Activated CD8-positive, alpha-beta T cell treated with anti-CD3 and anti-CD28 coated beads, Interleukin-2, amount 10 ng/mL, durations not matched to agents 7 days and 5 days (primary cell): ENCODE measurements at regions of chr14 and their contacts with region 1.

Region 1: GRCh38 chr14:91244501-91244901 is at the start of gene GPR68:
- DNase-seq: peak; percentile 61
- ATAC-seq: peak; percentile 12
- H3K4me3 Mint-ChIP-seq: peak within 1 kb of the TSS; percentile 87
- H3K27ac Mint-ChIP-seq: peak within 1 kb of the TSS; percentile 93
- H3K4me1 Mint-ChIP-seq: peaks cover 74% of the 10 kb centered on the region
- H3K27me3 Mint-ChIP-seq: no peaks in the 10 kb centered on the region
- total RNA-seq, gene GPR68: 44.6 to 45.3 TPM

Region 2: DNA sequence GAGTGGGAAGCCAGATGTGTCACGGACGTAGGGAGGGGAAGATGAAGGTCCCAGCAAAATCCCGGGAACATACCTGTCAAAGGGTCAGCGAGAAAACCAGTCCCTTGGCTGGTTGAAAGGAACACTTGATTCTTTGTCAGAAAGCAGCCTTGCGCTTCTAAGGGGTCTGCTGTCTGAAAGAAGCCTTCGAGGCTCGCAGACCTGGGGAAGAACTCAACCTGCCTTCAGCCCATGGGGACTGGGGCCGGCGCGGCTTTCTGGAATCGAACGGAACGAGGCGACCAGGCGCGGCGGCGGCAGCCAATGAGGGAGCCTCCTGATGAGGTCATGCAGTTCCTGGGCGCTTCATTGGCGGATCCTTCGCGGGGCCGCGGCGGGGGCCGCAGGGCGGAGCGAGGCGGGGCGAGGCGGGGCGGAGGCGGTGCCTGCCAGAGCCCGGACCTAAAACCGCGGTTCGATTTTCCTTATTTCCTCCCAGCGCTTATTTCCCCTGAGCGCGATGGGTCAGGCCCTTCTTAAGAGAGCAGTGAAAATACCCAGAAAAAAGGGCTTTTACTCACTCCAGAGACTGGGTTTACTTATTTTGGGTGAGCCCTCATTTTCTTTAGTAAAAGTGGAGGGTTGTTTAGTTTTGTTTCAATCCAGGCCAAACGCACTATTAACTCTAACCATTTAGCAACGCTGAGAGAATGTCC is 416.4 kb before region 1 on chr14:
- CTCF ChIA-PET with region 1: no interaction called
- POLR2A ChIA-PET with region 1: no interaction called
- DNase-seq: peak; percentile 94
- ATAC-seq: peak; percentile 98
- H3K4me3 Mint-ChIP-seq: peak overlapping the region; percentile 63
- H3K27ac Mint-ChIP-seq: peak overlapping the region; percentile 93
- H3K4me1 Mint-ChIP-seq: peaks cover 26% of the 10 kb centered on the region
- H3K27me3 Mint-ChIP-seq: peaks cover 5% of the 10 kb centered on the region

Region 3: GRCh38 chr14:91164685-91165084 is 79.8 kb before region 1 on chr14:
- CTCF ChIA-PET with region 1: no interaction called
- POLR2A ChIA-PET with region 1: no interaction called
- DNase-seq: no peak
- ATAC-seq: no peak
- H3K4me3 Mint-ChIP-seq: no peak overlapping the region
- H3K27ac Mint-ChIP-seq: peak overlapping the region; percentile 51
- H3K4me1 Mint-ChIP-seq: no peaks in the 10 kb centered on the region
- H3K27me3 Mint-ChIP-seq: no peaks in the 10 kb centered on the region

Region 4: GRCh38 chr14:91193069-91193468 is 51.4 kb before region 1 on chr14:
- CTCF ChIA-PET with region 1: interaction called, 6 read pairs
- POLR2A ChIA-PET with region 1: interaction called, 62 read pairs
- DNase-seq: no peak
- ATAC-seq: no peak
- H3K4me3 Mint-ChIP-seq: no peak overlapping the region
- H3K27ac Mint-ChIP-seq: peak overlapping the region; percentile 7
- H3K4me1 Mint-ChIP-seq: peaks cover 52% of the 10 kb centered on the region
- H3K27me3 Mint-ChIP-seq: no peaks in the 10 kb centered on the region

Region 5: GRCh38 chr14:91202234-91202974 is 42.1 kb before region 1 on chr14:
- CTCF ChIA-PET with region 1: interaction called, 3 read pairs
- POLR2A ChIA-PET with region 1: interaction called, 10 read pairs
- DNase-seq: peak; percentile 60
- ATAC-seq: no peak
- H3K4me3 Mint-ChIP-seq: peak overlapping the region; percentile 42
- H3K27ac Mint-ChIP-seq: peak overlapping the region; percentile 90
- H3K4me1 Mint-ChIP-seq: peaks cover 79% of the 10 kb centered on the region
- H3K27me3 Mint-ChIP-seq: no peaks in the 10 kb centered on the region

Region 6: DNA sequence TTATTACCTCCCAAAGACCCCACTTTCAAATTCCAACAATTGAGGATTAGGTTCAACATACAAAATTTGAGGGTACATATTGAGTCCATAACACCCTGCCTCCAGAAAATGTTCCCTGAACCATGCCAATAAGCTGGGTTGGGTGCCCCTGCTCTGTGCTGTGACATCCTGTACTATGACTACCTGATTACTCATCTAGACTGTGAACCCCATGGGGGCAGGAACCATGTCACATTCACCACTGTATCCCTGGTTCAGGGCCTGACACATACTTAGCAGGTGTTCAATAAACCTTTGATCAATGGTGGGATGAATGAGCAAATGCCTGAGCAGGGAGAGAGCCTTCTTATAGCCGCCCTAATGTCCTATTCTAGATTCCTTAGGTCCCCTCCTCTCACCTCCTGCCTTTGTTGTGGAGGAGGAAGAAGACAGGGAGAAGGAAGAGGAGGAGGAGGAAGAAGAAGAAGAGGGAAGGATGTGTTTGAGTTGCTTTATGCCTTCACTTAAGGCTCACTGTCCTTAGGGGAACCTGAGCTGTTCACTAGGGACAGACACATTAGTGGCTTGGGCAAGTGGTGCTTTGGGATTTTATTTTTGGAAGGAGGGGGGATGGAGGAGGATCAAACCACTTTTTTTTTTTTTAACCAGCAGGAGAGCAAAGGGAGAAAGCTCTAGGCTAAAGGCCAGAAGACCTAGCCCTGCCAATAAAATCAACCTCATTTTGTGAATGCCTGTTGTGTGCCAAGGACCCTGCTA is 21.3 kb before region 1 on chr14:
- CTCF ChIA-PET with region 1: interaction called, 85 read pairs
- POLR2A ChIA-PET with region 1: interaction called, 541 read pairs
- DNase-seq: no peak
- ATAC-seq: no peak
- H3K4me3 Mint-ChIP-seq: no peak overlapping the region
- H3K27ac Mint-ChIP-seq: peak overlapping the region; percentile 22
- H3K4me1 Mint-ChIP-seq: peaks cover 89% of the 10 kb centered on the region
- H3K27me3 Mint-ChIP-seq: no peaks in the 10 kb centered on the region

Region 7: GRCh38 chr14:91228112-91229004 is 16.1 kb before region 1 on chr14:
- CTCF ChIA-PET with region 1: interaction called, 85 read pairs
- POLR2A ChIA-PET with region 1: interaction called, 541 read pairs
- DNase-seq: peak; percentile 87
- ATAC-seq: peak; percentile 76
- H3K4me3 Mint-ChIP-seq: peak overlapping the region; percentile 75
- H3K27ac Mint-ChIP-seq: peak overlapping the region; percentile 97
- H3K4me1 Mint-ChIP-seq: peaks cover 96% of the 10 kb centered on the region
- H3K27me3 Mint-ChIP-seq: no peaks in the 10 kb centered on the region

Region 8: DNA sequence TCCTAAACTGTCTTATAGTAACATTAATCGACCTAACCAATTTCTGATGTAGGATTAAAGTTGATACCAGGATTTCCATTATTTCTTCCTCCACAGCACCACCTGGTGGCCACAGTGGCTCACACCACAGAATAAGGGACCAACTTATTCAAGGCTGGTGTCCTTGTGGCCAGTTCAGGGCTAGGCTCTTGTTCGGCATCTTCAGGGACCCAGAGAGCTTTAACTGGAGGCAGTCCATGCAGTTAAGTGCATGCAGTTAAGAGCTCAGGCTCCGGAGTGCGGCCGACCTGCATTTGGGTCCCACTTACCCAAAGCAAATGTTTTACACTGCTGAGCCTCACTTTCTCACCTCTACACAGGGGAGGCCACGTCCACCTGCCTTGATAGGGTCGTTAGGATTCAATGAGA is 42.0 kb after region 1 on chr14:
- CTCF ChIA-PET with region 1: interaction called, 28 read pairs
- POLR2A ChIA-PET with region 1: interaction called, 25 read pairs
- DNase-seq: peak; percentile 88
- ATAC-seq: peak; percentile 85
- H3K4me3 Mint-ChIP-seq: no peak overlapping the region
- H3K27ac Mint-ChIP-seq: peak overlapping the region; percentile 54
- H3K4me1 Mint-ChIP-seq: peaks cover 45% of the 10 kb centered on the region
- H3K27me3 Mint-ChIP-seq: no peaks in the 10 kb centered on the region

Region 9: GRCh38 chr14:91317381-91318308 is 73.1 kb after region 1 on chr14:
- CTCF ChIA-PET with region 1: interaction called, 3 read pairs
- POLR2A ChIA-PET with region 1: interaction called, 14 read pairs
- DNase-seq: peak; percentile 88
- ATAC-seq: peak; percentile 60
- H3K4me3 Mint-ChIP-seq: peak overlapping the region; percentile 52
- H3K27ac Mint-ChIP-seq: peak overlapping the region; percentile 95
- H3K4me1 Mint-ChIP-seq: peaks cover 78% of the 10 kb centered on the region
- H3K27me3 Mint-ChIP-seq: no peaks in the 10 kb centered on the region